Activated CD4-positive, alpha-beta T cell treated with anti-CD3 and anti-CD28 coated beads, Interleukin-2, amount 10 ng/mL, durations not matched to agents 24 days and 14 days (primary cell): ENCODE measurements at regions of chrX and their contacts with region 1.

Region 1: GRCh38 chrX:152958524-152959465 is 35.1 kb downstream of the PNMA5 start:
- DNase-seq: peak; percentile 96
- H3K4me3 Mint-ChIP-seq: peak overlapping the region; percentile 72
- H3K27ac Mint-ChIP-seq: peak overlapping the region; percentile 91
- H3K4me1 Mint-ChIP-seq: peaks cover 7% of the 10 kb centered on the region
- H3K27me3 Mint-ChIP-seq: peaks cover 2% of the 10 kb centered on the region

Region 2: DNA sequence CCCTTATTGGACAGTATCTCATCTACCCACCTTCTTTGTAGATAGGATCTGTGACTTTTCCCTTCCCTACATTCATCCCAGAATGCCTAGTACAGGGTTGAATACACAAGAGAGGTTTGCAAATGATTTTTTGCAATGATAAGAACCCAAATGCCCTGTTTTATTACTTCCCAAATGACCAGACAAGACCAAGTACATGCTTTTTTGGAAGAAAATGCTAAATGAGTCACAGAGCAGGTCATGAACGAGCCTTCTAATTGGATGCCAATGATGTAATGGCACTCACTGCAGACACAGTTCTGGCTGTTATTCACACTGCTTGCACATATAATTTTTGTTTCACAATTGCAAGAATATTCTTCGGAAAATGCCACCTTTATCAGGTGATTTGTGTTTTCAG is 338.9 kb before region 1 on chrX:
- intact Hi-C with region 1: no loop called
- DNase-seq: no peak
- H3K4me3 Mint-ChIP-seq: no peak overlapping the region
- H3K27ac Mint-ChIP-seq: no peak overlapping the region
- H3K4me1 Mint-ChIP-seq: no peaks in the 10 kb centered on the region
- H3K27me3 Mint-ChIP-seq: peaks cover 5% of the 10 kb centered on the region

Region 3: DNA sequence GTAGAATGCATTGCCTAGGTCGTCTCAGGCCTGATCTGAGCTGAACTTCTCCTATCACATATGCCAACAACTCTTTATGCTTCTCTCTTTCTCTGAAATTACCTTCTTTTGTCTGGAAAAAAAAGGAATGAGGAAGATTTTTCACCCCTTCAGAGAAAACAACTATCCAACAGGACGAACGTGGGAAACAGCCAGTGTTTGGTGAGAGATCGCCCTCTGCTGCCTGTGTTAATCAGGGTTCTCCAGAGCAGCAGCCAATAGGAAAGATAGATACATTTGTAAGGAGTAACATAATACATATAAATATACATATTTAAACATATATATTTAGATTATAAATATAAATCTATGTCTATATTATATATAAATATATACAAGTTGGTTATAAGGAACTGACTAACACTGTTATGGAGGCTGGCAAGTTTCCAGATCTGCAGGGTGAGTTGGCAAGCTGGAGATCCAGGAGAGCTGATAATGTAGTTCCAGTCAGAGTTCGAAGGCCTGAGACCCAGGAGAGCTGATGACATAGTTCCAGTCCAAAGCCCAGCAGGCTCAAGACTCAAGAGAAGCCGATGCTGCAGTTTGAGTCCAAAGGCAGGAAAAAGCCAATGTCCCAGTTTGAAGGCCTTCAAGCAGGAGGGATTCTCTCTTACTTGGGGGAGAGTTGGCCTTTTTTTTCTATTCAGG is 141.6 kb before region 1 on chrX:
- intact Hi-C with region 1: no loop called
- DNase-seq: peak; percentile 70
- H3K4me3 Mint-ChIP-seq: no peak overlapping the region
- H3K27ac Mint-ChIP-seq: no peak overlapping the region
- H3K4me1 Mint-ChIP-seq: peaks cover 13% of the 10 kb centered on the region
- H3K27me3 Mint-ChIP-seq: peaks cover 9% of the 10 kb centered on the region

Region 4: DNA sequence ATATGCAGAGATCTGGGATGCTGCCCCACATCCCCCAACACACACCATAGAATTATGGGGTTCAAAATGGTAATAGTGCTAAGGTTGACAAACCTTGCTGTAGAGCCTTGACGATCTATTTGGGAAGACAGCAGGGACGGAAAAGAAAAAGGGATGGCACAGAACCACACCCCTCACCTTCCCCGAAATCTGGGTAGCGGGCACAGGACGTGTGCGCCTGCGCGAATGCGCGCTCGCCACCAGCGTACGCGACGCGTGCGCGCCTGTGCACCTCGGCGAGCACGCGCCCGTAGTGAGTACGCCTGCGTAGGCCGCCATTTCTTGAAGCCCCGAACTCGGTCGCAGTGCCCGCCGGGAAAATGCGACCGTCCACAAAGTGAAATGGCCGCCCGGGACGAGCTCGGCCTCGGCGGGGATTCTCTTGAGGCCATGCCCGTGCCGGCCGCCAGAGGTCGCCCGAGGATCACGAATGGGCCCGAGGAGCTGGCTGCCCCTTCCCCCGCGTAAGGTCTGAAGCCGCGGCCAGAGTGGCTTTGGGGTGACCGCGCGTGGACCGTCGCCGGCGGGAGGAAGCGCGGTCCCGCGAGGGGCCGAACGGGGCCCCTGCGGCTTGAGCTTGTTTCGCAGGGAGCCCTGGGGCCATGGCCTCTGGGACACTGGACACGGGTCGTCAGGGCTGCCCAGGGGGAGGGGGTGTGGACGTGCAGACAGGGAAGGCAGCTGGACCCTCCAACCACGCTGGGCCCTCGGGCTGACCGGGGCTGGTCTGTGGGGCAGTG is 17.3 kb before region 1 on chrX:
- intact Hi-C with region 1: loop called (anchors 2 kb)
- DNase-seq: peak; percentile 96
- H3K4me3 Mint-ChIP-seq: peak overlapping the region; percentile 88
- H3K27ac Mint-ChIP-seq: peak overlapping the region; percentile 84
- H3K4me1 Mint-ChIP-seq: peaks cover 4% of the 10 kb centered on the region
- H3K27me3 Mint-ChIP-seq: no peaks in the 10 kb centered on the region

Region 5: DNA sequence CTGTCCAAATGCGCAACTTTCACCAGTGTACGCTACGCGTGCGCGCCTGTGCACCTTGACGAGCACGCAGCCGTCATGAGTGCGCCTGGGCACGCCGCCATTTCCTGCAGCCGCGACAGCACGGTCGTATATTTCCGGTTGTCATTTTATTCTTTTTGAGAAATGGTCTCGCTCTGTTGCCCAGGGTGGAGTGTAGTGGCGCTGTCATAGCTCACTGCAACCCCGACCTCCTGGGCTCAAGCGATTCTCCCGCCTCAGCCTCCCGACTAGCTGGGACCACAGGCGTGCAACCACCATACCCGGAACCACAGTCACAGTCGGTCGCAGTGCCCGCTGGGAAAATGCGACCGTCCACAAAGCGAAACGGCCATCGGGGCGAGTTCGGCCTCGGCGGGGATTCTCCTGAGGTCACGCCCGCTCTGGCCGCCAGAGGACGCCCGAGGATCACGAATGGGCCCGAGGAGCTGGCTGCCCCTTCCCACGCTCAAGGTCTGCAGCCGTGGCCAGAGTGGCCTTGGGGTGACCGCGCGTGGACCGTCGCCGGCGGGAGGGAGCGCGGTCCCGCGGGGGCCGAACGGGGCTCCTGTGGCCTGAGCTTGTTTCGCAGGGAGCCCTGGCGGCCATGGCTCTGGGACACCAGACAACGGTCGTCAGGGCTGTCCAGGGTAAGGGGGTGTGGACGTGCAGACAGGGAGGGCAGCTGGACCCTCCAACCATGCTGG is 73.8 kb after region 1 on chrX:
- intact Hi-C with region 1: loop called (anchors 1 kb)
- DNase-seq: peak; percentile 90
- H3K4me3 Mint-ChIP-seq: peak overlapping the region; percentile 86
- H3K27ac Mint-ChIP-seq: peak overlapping the region; percentile 85
- H3K4me1 Mint-ChIP-seq: peaks cover 4% of the 10 kb centered on the region
- H3K27me3 Mint-ChIP-seq: no peaks in the 10 kb centered on the region

Region 6: DNA sequence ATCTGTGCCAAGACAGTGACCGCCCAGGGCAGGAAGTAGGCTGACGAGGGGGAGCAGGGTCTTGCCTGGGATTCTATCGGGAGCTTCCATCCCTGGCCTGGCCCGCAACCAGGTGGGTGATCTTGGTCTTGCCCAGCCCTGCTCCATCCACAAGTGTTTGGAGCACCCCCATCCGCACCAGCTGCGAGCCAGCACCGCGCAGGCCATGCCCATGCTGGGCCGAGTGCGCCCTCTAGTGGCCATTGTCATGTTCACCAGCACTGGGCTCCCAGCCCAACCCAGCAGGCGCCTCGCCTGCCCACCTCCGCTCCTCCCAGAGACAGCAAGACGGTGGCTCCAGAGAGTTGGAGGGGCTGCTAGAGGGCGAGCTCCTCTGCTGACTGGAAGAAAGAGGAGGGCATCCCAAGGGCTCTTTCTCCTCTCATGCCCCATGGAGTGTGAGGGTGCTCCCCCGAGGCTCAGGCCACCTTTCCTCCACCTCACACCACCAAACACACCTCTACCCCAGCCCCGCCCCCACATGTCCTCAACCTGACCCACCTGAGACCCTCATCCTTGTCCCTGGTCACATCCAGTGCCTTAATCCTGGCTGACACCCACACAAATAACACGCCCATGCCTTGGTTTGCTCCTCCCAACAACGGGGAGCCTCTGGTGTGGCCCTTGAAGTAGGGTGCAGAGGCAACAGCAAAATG is 548.8 kb after region 1 on chrX:
- intact Hi-C with region 1: loop called (anchors 1 kb)
- DNase-seq: peak; percentile 94
- H3K4me3 Mint-ChIP-seq: no peak overlapping the region
- H3K27ac Mint-ChIP-seq: no peak overlapping the region
- H3K4me1 Mint-ChIP-seq: no peaks in the 10 kb centered on the region
- H3K27me3 Mint-ChIP-seq: no peaks in the 10 kb centered on the region